Stomach (tissue), 19 donors: ENCODE measurements at regions of chr15 and their contacts with region 1.

Region 1: GRCh38 chr15:69074843-69075224 is 60.3 kb downstream of the NOX5 start:
- DNase-seq: peak in 1 of 2 donors; percentile 71
- H3K4me3 ChIP-seq: peak overlapping the region; percentile 49 to 66 (median 56)
- H3K27ac ChIP-seq: peak overlapping the region in 3 of 5 donors; percentile 63 to 74 (median 71)
- H3K4me1 ChIP-seq: peaks cover 0 to 25% (median 24%) of the 10 kb centered on the region in 4 donors
- H3K27me3 ChIP-seq: peaks cover 0 to 19% (median 0%) of the 10 kb centered on the region in 3 donors
- CTCF ChIP-seq: no peak
- EP300 ChIP-seq: no peak
- POLR2A ChIP-seq: no peak

Region 2: GRCh38 chr15:68930268-68931022 is 144.4 kb before region 1 on chr15 and contains the start of gene SPESP1:
- intact Hi-C with region 1: no loop called
- DNase-seq: peak; percentile 49 to 72
- H3K4me3 ChIP-seq: peak within 1 kb of the TSS; percentile 28 to 44 (median 32)
- H3K27ac ChIP-seq: no peak within 1 kb of the TSS
- H3K4me1 ChIP-seq: no peaks in the 10 kb centered on the region
- H3K27me3 ChIP-seq: peaks cover 0 to 10% (median 0%) of the 10 kb centered on the region in 3 donors
- CTCF ChIP-seq: no peak
- EP300 ChIP-seq: no peak
- POLR2A ChIP-seq: no peak
- total RNA-seq, gene SPESP1: 1.8 to 19.8 (median 2.3) TPM in 4 of 5 donors, not detected in the other

Region 3: GRCh38 chr15:69128667-69129321 is 54.0 kb after region 1 on chr15:
- intact Hi-C with region 1: no loop called
- DNase-seq: no peak
- H3K4me3 ChIP-seq: no peak overlapping the region
- H3K27ac ChIP-seq: peak overlapping the region in 2 of 5 donors; percentile 12 to 20
- H3K4me1 ChIP-seq: peaks cover 0 to 9% (median 3%) of the 10 kb centered on the region in 4 donors
- H3K27me3 ChIP-seq: no peaks in the 10 kb centered on the region
- CTCF ChIP-seq: no peak
- EP300 ChIP-seq: no peak
- POLR2A ChIP-seq: no peak

Region 4: DNA sequence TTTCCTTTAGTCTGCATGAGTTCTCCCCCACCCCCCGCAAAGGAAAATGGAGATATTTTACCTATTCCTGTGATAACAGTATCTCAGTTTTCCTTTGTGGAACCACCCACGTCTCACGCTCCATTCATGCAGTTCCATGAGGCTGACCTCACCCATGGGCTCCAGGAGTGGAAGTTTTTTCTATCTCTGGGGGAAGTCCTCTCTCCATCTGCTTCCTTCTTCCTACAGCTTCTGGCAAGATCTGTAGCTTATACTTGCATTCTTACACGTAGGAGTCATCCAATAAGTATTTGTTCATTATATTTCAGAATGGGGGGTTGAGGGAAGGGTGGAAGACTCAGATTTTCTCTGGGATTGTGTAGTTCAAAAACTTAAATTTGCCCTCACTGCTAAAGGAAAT is 79.8 kb after region 1 on chr15:
- intact Hi-C with region 1: loop called (anchors 5 kb)
- DNase-seq: peak in 1 of 2 donors; percentile 33
- H3K4me3 ChIP-seq: no peak overlapping the region
- H3K27ac ChIP-seq: peak overlapping the region in 1 of 5 donors; percentile 1
- H3K4me1 ChIP-seq: peaks cover 0 to 12% (median 0%) of the 10 kb centered on the region in 4 donors
- H3K27me3 ChIP-seq: peaks cover 0 to 8% (median 0%) of the 10 kb centered on the region in 3 donors
- CTCF ChIP-seq: no peak
- EP300 ChIP-seq: no peak
- POLR2A ChIP-seq: no peak

Region 5: GRCh38 chr15:69475769-69476358 is 401.0 kb after region 1 on chr15:
- intact Hi-C with region 1: no loop called
- DNase-seq: peak; percentile 87 to 91
- H3K4me3 ChIP-seq: no peak overlapping the region
- H3K27ac ChIP-seq: no peak overlapping the region
- H3K4me1 ChIP-seq: peaks cover 0 to 17% (median 2%) of the 10 kb centered on the region in 4 donors
- H3K27me3 ChIP-seq: no peaks in the 10 kb centered on the region
- CTCF ChIP-seq: peak in 5 of 7 experiments; percentile 82 to 96 (median 95)
- EP300 ChIP-seq: no peak
- POLR2A ChIP-seq: no peak